ENCODE measurements at regions of chr5 and their contacts with region 1.

Region 1: DNA sequence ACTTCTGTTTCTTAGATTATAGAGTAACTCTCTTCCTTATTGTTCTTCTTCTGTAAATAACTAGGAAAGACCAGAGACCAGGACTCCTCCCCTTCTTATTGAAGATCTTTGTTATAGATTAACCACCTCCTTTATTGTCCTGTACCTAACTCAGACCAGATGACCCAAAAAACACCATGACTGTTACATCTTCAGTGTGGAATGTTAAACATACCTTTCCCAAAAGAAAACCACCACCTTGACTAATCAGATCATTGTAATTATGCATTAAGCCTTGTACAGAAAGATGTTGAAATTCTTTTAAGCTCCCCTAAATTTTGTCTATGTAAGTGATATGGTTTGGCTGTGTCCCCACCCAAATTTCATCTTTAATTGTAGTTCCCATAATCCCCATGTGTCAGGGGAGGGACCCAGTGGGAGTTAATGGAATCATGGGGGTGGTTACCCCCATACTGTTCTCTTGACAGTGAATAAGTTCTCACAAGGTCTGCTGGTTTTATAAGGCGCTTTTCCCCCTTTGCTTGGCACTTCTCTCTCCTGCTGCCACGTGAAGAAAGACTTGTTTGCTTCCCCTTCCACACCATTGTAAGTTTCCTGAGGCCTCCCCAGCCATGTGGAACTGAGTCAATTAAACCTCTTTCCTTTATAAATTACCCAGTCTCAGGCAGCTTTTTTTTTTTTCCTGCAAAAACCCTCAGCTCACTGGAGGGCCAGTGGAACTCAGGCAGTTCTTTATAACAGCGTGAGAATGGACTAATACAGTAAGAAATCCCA is 26.3 kb downstream of the ARSB start:
- DNase-seq: no peak
- ATAC-seq: no peak

Region 2: GRCh38 chr5:78317515-78317914 is 641.3 kb before region 1 on chr5:
- intact Hi-C with region 1: loop called (anchors 5 kb)
- DNase-seq: no peak
- ATAC-seq: no peak

Measured in Right ventricle myocardium superior (tissue), 1 donor.